ENCODE measurements at regions of chr2 and their contacts with region 1.

Region 1: DNA sequence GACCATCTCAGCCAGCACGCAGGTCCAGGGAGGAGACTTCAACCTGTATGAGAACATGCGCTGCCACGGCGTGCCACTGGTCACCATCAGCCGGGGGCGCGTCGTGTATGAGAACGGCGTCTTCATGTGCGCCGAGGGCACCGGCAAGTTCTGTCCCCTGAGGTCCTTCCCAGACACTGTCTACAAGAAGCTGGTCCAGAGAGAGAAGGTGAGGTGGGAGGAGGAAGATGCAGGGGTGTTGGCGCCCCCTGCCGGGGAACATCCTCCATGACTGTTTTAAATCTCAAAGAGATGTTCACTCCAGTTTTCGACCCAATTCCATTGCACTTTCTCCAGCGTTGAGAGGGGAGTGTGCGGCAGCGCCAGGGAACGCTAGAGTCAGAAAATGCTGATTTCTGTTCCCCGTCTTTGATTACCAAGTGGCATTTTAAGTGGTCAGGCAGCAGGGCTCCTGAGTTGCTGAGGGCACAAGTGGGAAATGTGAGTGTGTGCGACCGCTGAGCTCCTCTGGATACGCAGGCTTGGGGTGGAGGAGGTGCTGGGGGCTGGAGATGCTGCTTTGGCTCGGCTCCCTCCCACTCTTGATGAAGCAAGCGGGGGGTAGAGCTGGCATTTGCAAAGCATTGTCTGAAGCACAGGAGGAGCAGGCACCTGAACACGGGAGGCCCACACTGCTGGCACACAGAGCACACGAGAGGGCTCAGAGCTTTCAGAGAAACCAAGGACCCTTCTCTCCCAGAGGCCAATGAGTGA is 27.7 kb upstream of the MAPRE3 start:
- DNase-seq: peak; percentile 28
- ATAC-seq: peak; percentile 56
- H3K4me3 ChIP-seq: no peak overlapping the region
- H3K27ac ChIP-seq: no peak overlapping the region
- H3K4me1 ChIP-seq: no peaks in the 10 kb centered on the region
- H3K27me3 ChIP-seq: no peaks in the 10 kb centered on the region
- CTCF ChIP-seq: peak; percentile 95

Region 2: GRCh38 chr2:25740810-25741381 is 1201.8 kb before region 1 on chr2:
- CTCF ChIA-PET with region 1: no interaction called
- POLR2A ChIA-PET with region 1: no interaction called
- in situ Hi-C with region 1: no loop called
- intact Hi-C with region 1: no loop called
- DNase-seq: no peak
- ATAC-seq: no peak
- H3K4me3 ChIP-seq: no peak overlapping the region
- H3K27ac ChIP-seq: no peak overlapping the region
- H3K4me1 ChIP-seq: no peaks in the 10 kb centered on the region
- H3K27me3 ChIP-seq: no peaks in the 10 kb centered on the region
- CTCF ChIP-seq: no peak

Region 3: DNA sequence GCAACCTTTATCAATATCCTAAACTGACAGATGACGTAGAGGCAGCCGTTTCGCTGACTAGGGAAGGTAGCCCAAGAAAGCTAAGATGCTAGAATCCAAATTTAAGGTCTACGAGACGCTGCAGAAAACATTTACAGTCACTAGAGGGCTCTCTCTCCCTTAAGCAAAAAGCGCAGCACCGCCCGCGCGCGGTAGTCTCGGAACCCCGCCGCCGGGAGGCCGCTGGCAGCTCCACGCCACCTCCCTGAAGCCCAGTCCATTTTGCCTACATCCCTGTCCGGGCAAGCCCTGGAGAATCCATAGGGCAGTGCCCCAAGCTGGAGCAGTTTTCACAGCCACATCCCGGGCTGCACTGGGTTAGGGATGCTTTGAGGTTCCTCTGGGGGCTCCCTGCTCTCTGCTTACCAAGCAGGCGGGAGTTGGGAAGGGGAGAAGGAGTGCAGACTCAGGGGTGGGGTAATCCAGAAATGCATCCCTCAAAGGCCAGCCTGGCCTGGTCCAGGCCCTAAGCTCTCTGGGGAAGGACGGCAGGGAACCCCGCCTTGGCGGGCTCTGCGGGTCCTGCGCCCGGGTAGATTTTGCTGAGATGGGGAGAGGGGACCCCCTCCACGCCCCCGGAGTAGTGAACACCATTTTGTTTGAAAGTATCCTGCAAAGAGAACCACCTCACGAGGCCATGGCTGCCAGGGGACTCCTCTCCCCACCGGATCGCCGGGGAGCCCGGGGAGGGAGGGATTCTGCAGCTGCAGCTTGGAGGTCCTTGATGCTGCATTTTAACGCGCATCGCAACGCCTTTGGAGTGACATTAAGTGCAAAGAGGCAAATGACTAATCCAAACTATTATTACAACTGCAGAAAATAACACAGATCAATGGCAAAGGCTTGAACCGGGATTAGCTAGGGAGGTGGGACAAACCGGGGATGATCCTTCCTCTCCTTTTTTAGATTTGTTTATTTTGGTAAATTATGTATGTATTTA is 96.1 kb before region 1 on chr2:
- CTCF ChIA-PET with region 1: interaction called, 24 read pairs
- POLR2A ChIA-PET with region 1: no interaction called
- in situ Hi-C with region 1: no loop called
- intact Hi-C with region 1: loop called (anchors 2 kb)
- DNase-seq: peak; percentile 35
- ATAC-seq: peak; percentile 76
- H3K4me3 ChIP-seq: no peak overlapping the region
- H3K27ac ChIP-seq: no peak overlapping the region
- H3K4me1 ChIP-seq: peaks cover 4% of the 10 kb centered on the region; the same call in 1 of the 2 replicates
- H3K27me3 ChIP-seq: peaks cover 30% of the 10 kb centered on the region
- CTCF ChIP-seq: peak; percentile 93

Measured in Panc1 (cell line).